ENCODE measurements at regions of chr9 and their contacts with region 1.

Region 1: DNA sequence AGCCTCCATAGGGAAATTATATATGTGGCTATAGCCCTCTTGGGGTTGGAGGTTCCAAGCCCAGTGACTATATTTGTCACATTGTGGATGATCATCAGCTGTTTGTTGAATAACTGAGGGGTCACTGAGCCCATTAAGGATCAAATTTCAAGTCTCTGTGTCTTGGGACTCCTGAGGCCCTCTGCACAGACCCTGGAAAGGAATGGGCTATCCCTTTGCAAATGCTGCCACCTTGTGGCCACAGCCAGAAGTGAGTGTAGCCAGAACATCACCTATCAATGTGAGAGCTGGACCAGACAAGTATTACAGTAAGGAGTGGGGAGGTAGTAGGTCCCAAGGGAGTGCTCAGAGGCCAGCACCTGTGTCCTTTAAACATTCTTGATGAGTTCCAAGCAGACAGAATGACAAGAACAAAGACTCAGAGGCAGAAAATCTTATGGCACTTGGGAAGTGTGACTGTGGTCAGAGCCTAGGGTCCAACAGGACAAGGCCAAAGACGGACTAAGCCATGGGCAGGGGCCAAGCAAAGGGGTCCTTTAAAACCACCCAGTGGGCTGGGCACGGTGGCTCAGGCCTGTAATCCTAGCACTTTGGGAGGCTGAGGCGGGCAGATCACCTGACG is 8.2 kb downstream of the RPP25L start:
- DNase-seq: peak; percentile 85
- H3K4me3 ChIP-seq: no peak overlapping the region
- H3K27ac ChIP-seq: no peak overlapping the region
- H3K4me1 ChIP-seq: no peaks in the 10 kb centered on the region
- H3K27me3 ChIP-seq: no peaks in the 10 kb centered on the region
- CTCF ChIP-seq: peak; percentile 89 to 94 (median 91)
- EP300 ChIP-seq: no peak
- POLR2A ChIP-seq: no peak

Region 2: DNA sequence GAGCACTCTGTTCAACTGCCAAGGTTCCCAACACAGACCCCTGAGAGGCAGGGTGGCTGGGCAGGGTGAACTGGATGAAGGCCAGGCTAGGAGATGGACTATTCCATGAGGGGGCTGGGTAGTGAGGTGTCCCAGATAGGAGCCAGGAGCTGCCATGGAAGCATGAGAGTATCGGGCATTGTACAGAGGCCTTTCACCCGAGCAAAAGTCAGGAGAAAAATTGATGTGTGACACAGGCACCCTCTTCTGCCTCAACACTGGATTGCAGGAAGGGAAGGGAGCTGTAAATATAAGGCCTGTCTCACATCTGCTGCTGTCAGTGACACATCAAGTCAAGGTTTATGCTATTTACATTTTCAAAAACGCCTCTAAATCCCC is 350.3 kb before region 1 on chr9:
- in situ Hi-C with region 1: no loop called
- intact Hi-C with region 1: no loop called
- DNase-seq: no peak
- H3K4me3 ChIP-seq: no peak overlapping the region
- H3K27ac ChIP-seq: peak overlapping the region; percentile 45 to 80 (median 57)
- H3K4me1 ChIP-seq: peaks cover 0 to 20% (median 3%) of the 10 kb centered on the region in 4 donors
- H3K27me3 ChIP-seq: no peaks in the 10 kb centered on the region
- CTCF ChIP-seq: no peak
- EP300 ChIP-seq: no peak
- POLR2A ChIP-seq: no peak

Region 3: DNA sequence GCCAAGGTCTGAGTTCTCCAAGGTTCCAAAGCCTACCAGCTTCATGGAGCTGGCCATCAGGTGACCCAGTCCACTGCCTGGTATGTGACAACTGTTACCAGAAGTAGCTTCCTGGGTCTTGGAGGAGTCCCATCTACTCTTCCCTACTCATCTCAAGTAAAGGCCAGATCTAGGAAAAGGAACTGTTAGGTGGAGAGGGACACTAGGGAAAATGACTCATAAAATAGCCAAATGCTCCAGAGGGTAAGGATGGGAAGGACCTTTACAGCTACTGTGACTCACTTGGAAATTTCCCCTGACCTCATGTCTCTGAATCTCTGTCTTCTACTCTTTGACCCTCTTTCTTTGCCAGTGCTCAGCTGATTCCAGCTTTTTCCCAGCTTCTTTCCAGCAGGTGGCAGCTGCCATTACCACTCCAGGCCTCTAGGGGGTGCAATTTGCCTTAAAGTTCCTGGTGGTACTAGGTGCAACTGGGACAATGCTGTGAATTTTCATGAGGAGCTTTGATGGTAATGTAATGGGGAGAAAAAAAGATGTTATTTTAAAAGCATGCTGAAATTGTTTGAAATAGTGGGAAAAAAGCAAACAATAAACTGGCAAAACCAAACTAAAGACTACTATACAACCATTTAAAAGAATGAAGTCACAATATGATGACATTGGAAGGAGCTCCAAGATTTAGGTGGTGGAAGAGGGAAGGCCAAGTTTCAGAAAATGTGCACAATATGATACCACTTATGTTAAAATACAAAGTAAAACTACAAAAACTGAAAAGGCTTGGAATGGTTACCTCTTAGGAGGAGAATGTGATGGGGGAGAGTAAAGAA is 200.0 kb before region 1 on chr9:
- in situ Hi-C with region 1: loop called in 2 of 4 experiments (anchors 10 kb)
- intact Hi-C with region 1: loop called (anchors 10 kb)
- DNase-seq: peak; percentile 71
- H3K4me3 ChIP-seq: no peak overlapping the region
- H3K27ac ChIP-seq: no peak overlapping the region
- H3K4me1 ChIP-seq: no peaks in the 10 kb centered on the region
- H3K27me3 ChIP-seq: no peaks in the 10 kb centered on the region
- CTCF ChIP-seq: peak; percentile 93 to 99 (median 97)
- EP300 ChIP-seq: no peak
- POLR2A ChIP-seq: no peak

Region 4: GRCh38 chr9:34524349-34524748 is 79.4 kb before region 1 on chr9:
- in situ Hi-C with region 1: no loop called
- intact Hi-C with region 1: no loop called
- DNase-seq: no peak
- H3K4me3 ChIP-seq: no peak overlapping the region
- H3K27ac ChIP-seq: no peak overlapping the region
- H3K4me1 ChIP-seq: peaks cover 6 to 12% (median 10%) of the 10 kb centered on the region in 4 donors
- H3K27me3 ChIP-seq: peaks cover 21% of the 10 kb centered on the region
- CTCF ChIP-seq: no peak
- EP300 ChIP-seq: no peak
- POLR2A ChIP-seq: no peak

Region 5: DNA sequence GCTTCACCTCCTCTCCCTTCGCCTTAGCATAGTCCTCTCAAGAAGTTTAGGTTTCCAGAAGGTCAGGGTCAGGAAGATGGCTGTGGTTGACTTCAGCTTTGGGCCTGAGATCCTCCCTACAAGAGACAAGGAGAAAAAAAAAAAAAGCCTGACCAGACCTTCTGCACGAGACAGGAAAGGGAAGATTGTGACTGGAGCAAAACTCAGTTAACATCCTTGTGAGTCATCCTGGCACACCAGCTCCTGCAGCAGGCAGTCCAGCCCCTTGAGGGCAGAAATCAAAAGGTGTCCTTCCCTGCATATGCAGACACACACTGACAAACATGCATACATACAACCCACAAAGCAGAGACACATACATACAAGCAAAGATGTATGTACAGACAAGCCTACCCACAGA is 62.9 kb before region 1 on chr9:
- in situ Hi-C with region 1: loop called in 3 of 4 experiments (anchors 5 to 10 kb)
- intact Hi-C with region 1: no loop called
- DNase-seq: no peak
- H3K4me3 ChIP-seq: no peak overlapping the region
- H3K27ac ChIP-seq: no peak overlapping the region
- H3K4me1 ChIP-seq: no peaks in the 10 kb centered on the region
- H3K27me3 ChIP-seq: peaks cover 10% of the 10 kb centered on the region
- CTCF ChIP-seq: no peak
- EP300 ChIP-seq: no peak
- POLR2A ChIP-seq: no peak

Region 6: DNA sequence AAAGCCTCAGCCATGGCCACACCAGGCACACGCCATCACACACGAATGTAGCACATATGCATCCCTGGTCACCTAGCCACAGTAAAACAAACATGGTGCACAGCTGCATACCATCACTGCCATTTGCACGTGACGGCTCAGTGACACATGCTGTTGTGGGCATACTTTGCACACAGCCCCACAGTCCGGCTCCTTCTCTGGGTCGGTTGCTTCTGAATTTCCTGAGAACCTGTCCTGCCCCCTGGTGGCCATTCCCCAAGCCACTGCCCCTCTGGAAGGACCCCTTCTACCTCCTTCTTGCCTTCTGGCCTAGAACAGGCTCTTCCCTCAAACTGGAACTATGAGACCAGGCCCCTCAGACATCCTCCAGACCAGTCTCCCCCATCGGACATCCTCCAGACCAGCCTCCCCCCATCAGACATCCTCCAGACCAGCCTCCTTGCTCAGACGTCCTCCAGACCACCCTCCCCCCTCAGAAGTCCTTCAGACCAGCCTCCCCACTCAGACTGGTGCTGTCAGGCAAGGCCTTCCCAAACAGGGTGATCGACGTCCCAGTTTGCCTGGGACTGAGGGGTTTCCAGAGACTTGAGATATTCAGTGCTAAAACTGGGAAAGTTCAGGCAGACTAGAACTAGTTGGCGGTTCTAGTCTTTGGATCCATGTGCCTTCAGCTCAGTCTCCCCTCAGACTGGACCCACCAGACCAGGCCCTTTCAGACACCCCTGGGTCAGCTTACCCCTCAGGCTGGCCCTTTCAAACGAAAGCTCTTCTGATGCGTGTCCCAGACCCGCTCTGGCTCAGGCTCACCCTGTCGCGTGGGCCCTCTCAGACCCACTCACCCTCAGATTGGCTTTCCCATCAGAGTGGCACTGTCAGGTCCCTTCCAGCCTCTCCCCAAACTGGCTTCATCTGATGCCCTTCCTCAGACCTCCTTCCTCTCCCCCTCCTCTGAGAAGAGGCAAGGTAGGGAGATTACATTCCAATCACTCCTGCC is 56.6 kb before region 1 on chr9:
- in situ Hi-C with region 1: loop called in 3 of 4 experiments (anchors 5 to 10 kb)
- intact Hi-C with region 1: no loop called
- DNase-seq: peak; percentile 64
- H3K4me3 ChIP-seq: no peak overlapping the region
- H3K27ac ChIP-seq: no peak overlapping the region
- H3K4me1 ChIP-seq: peaks cover 0 to 3% (median 0%) of the 10 kb centered on the region in 4 donors
- H3K27me3 ChIP-seq: peaks cover 7% of the 10 kb centered on the region
- CTCF ChIP-seq: peak; percentile 54 to 81 (median 69)
- EP300 ChIP-seq: no peak
- POLR2A ChIP-seq: no peak

Measured in transverse colon (tissue), 4 donors.